SK-N-SH (cell line): ENCODE measurements at regions of chr6 and their contacts with region 1.

Region 1: GRCh38 chr6:33771146-33772081 is 17.5 kb downstream of the LEMD2 start:
- DNase-seq: peak; percentile 92
- H3K4me3 ChIP-seq: peak overlapping the region in 1 of 2 experiments; percentile 40; a peak in 1 of 4 replicates
- H3K27ac ChIP-seq: peak overlapping the region; percentile 78 to 84
- H3K4me1 ChIP-seq: peaks cover 16 to 48% of the 10 kb centered on the region in 2 experiments; a peak in 3 of 4 replicates
- H3K27me3 ChIP-seq: no peaks in the 10 kb centered on the region
- CTCF ChIP-seq: peak; percentile 92
- EP300 ChIP-seq: peak; percentile 30 to 68; a peak in 2 of 4 replicates
- RAD21 ChIP-seq: peak; percentile 84

Region 2: GRCh38 chr6:33744001-33744848 is 27.2 kb before region 1 on chr6:
- CTCF ChIA-PET with region 1: interaction called, 95 read pairs
- POLR2A ChIA-PET with region 1: no interaction called
- DNase-seq: peak; percentile 90
- H3K4me3 ChIP-seq: no peak overlapping the region; a peak in 1 of 4 replicates
- H3K27ac ChIP-seq: no peak overlapping the region
- H3K4me1 ChIP-seq: peaks cover 15 to 37% of the 10 kb centered on the region in 2 experiments; a peak in 3 of 4 replicates
- H3K27me3 ChIP-seq: no peaks in the 10 kb centered on the region
- CTCF ChIP-seq: peak; percentile 93
- EP300 ChIP-seq: no peak
- RAD21 ChIP-seq: peak; percentile 83

Region 3: DNA sequence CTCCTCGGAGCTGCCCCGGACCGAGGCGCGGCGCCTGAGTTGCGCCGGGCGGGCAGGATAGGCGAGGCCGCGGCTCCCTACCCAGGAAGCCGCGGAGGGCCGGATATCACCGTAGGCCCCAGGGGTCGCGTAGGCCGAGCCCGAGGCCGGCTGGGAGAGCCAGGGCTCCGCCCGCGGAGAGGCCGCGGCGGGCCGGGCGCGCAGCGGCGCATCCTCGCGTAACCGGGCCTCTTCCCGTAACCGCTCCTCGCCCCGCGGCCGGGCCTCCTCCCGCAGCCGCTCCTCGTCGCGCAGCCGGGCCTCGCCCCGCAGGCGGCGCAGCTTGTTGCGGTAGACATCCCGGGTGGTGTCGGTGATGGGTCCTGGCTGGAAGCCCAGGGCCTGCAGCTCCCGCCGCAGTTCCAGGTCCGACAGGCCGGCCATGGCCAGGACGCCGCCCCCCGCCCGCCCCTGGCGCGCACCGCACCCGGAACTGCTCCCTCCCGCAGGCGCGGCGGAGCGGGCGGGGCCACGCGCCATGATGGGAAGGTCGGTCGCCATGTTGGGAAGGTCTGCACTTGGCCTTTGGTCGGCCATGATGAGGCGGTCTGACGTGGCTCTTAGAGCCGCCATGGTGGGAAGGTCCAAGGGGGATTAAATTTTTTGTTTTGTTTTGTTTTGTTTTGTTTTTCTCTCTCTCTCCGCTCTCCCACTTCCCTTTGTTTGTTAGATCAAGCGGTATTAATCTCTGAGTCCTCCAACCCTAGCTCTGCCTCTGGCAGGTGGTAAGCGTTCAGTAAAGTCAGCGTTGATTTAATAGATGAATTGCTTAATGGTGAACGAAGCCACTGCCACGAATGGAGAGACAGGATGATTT is 17.5 kb after region 1 on chr6 and contains the start of gene LEMD2:
- CTCF ChIA-PET with region 1: interaction called, 53 read pairs
- POLR2A ChIA-PET with region 1: interaction called, 3 read pairs
- DNase-seq: peak; percentile 99
- H3K4me3 ChIP-seq: peak within 1 kb of the TSS; percentile 80 to 88
- H3K27ac ChIP-seq: peak within 1 kb of the TSS; percentile 77 to 91
- H3K4me1 ChIP-seq: peaks cover 29 to 34% of the 10 kb centered on the region in 2 experiments
- H3K27me3 ChIP-seq: no peaks in the 10 kb centered on the region
- CTCF ChIP-seq: no peak
- EP300 ChIP-seq: peak in 1 of 2 experiments; percentile 34; a peak in 2 of 4 replicates
- RAD21 ChIP-seq: no peak
- polyA plus RNA-seq, gene LEMD2: 56.5 and 59.5 TPM in 2 replicates

Region 4: GRCh38 chr6:33851959-33852358 is 80.5 kb after region 1 on chr6:
- CTCF ChIA-PET with region 1: interaction called, 21 read pairs
- POLR2A ChIA-PET with region 1: no interaction called
- DNase-seq: no peak
- H3K4me3 ChIP-seq: no peak overlapping the region
- H3K27ac ChIP-seq: no peak overlapping the region
- H3K4me1 ChIP-seq: peaks cover 0 to 4% of the 10 kb centered on the region in 2 experiments; a peak in 1 of 4 replicates
- H3K27me3 ChIP-seq: no peaks in the 10 kb centered on the region
- CTCF ChIP-seq: peak; percentile 55
- EP300 ChIP-seq: no peak
- RAD21 ChIP-seq: peak; percentile 61

Region 5: GRCh38 chr6:34027445-34027936 is 256.1 kb after region 1 on chr6:
- CTCF ChIA-PET with region 1: interaction called, 184 read pairs
- POLR2A ChIA-PET with region 1: interaction called, 3 read pairs
- DNase-seq: peak; percentile 88
- H3K4me3 ChIP-seq: no peak overlapping the region
- H3K27ac ChIP-seq: no peak overlapping the region
- H3K4me1 ChIP-seq: peaks cover 0 to 21% of the 10 kb centered on the region in 2 experiments; a peak in 1 of 4 replicates
- H3K27me3 ChIP-seq: no peaks in the 10 kb centered on the region; the same call in 1 of the 2 replicates
- CTCF ChIP-seq: peak; percentile 77
- EP300 ChIP-seq: no peak
- RAD21 ChIP-seq: peak; percentile 70

Region 6: DNA sequence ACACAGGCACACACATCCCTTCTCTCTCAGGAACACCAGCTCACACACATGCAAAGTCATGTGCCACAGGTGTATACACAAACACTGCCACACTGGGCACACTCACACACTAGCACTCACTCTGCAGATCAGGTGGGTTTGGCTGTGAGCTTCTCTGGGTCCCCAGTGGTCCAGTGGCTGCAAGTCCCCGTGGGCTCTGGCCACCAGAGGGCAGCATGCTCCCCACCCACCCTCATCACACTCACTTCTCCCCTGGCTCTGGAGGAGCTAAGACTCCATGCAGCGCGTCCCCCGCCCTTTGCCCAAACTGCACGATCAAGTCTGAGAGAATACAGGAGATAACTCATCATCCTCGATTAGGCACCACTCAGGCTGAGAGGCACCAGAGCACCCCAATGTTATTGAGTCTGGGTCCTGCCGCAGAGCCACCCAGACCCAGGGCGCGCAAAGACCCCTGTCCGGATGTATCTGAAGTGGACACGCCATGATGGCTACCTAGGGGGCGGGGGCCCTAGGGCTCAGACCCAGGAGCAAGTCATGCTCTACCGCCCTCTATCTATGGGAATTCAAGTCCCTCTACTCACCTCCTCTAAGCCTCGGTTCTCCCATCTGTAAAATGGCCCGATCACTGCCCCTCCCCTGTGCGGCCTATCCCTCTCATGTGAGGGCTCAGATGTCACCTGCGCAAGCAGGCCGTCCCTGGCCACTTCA is 284.0 kb after region 1 on chr6:
- CTCF ChIA-PET with region 1: interaction called, 35 read pairs
- POLR2A ChIA-PET with region 1: no interaction called
- DNase-seq: peak; percentile 92
- H3K4me3 ChIP-seq: no peak overlapping the region; a peak in 1 of 4 replicates
- H3K27ac ChIP-seq: no peak overlapping the region
- H3K4me1 ChIP-seq: peaks cover 0 to 10% of the 10 kb centered on the region in 2 experiments; a peak in 1 of 4 replicates
- H3K27me3 ChIP-seq: no peaks in the 10 kb centered on the region; the same call in none of the 2 replicates
- CTCF ChIP-seq: peak; percentile 84
- EP300 ChIP-seq: no peak
- RAD21 ChIP-seq: peak; percentile 73

Region 7: DNA sequence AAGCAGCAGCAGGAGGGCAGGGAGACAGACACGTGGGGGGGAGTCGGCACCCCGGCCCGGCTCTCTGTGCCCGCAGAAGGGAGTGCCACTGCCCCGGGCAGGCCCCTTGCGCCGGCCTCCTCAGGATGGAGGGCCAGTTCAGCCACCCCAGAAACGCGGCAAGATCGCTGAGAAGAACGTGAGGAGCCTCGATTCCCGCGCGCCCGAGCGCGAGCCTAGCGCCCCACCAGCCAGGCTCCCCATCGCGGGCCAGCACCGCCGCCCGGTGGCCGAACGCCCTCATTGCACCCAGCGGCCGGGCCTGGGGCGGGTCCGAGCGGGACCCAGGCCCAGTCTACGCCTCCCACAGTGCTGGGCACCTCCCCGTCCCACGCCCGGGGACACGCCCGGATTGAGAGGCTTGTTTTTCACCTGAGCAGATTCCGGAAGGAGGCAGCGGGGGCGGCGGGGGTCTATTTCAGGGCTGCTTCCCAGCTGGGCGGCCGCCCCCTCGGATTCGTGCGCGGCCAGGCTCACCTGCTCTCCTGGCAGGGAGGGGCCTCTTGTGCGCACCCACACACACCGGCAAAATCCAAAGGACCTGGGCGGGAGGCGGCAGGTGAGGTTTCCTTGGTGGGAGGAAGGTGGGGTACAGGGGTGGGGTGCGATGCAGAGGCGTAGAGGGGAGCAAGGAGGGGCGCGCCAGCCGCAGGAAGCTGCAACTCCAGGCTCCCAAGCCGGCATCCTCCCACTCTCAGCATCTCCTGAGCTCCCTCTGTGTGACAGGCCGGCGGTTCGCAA is 383.4 kb after region 1 on chr6:
- CTCF ChIA-PET with region 1: interaction called, 204 read pairs
- POLR2A ChIA-PET with region 1: no interaction called
- DNase-seq: peak; percentile 98
- H3K4me3 ChIP-seq: peak overlapping the region; percentile 17 to 59; a peak in 2 of 4 replicates
- H3K27ac ChIP-seq: no peak overlapping the region
- H3K4me1 ChIP-seq: peaks cover 0 to 2% of the 10 kb centered on the region in 2 experiments; a peak in 1 of 4 replicates
- H3K27me3 ChIP-seq: peaks cover 25% of the 10 kb centered on the region
- CTCF ChIP-seq: peak; percentile 89
- EP300 ChIP-seq: no peak
- RAD21 ChIP-seq: peak; percentile 95